BJ (cell line): ENCODE measurements at regions of chr10 and their contacts with region 1.

Region 1: GRCh38 chr10:30284865-30285594 is 64.0 kb downstream of the MTPAP start:
- DNase-seq: no peak
- H3K4me3 ChIP-seq: no peak overlapping the region
- H3K27me3 ChIP-seq: peaks cover 7% of the 10 kb centered on the region
- CTCF ChIP-seq: no peak

Region 2: GRCh38 chr10:29776246-29776645 is 508.8 kb before region 1 on chr10:
- CTCF ChIA-PET with region 1: no interaction called
- POLR2A ChIA-PET with region 1: interaction called, 11 read pairs
- DNase-seq: no peak
- H3K4me3 ChIP-seq: no peak overlapping the region
- H3K27me3 ChIP-seq: no peaks in the 10 kb centered on the region; the same call in 1 of the 2 replicates
- CTCF ChIP-seq: no peak